ENCODE measurements at regions of chr22 and their contacts with region 1.

Region 1: GRCh38 chr22:50620593-50621355 is 7.2 kb downstream of the ARSA start:
- DNase-seq: peak in 1 of 3 donors; percentile 34
- H3K4me3 ChIP-seq: peak overlapping the region in 2 of 3 experiments; percentile 21 to 60
- H3K4me3 Mint-ChIP-seq: peak overlapping the region; percentile 45 to 84
- H3K27ac ChIP-seq: no peak overlapping the region
- H3K27ac Mint-ChIP-seq: peak overlapping the region in 3 of 7 donors; percentile 6 to 82 (median 63)
- H3K4me1 ChIP-seq: peaks cover 34 to 36% of the 10 kb centered on the region in 2 donors
- H3K4me1 Mint-ChIP-seq: peaks cover 36% of the 10 kb centered on the region
- H3K27me3 ChIP-seq: no peaks in the 10 kb centered on the region
- H3K27me3 Mint-ChIP-seq: peaks cover 5 to 10% (median 5%) of the 10 kb centered on the region in 3 donors
- CTCF ChIP-seq: peak; percentile 82

Region 2: DNA sequence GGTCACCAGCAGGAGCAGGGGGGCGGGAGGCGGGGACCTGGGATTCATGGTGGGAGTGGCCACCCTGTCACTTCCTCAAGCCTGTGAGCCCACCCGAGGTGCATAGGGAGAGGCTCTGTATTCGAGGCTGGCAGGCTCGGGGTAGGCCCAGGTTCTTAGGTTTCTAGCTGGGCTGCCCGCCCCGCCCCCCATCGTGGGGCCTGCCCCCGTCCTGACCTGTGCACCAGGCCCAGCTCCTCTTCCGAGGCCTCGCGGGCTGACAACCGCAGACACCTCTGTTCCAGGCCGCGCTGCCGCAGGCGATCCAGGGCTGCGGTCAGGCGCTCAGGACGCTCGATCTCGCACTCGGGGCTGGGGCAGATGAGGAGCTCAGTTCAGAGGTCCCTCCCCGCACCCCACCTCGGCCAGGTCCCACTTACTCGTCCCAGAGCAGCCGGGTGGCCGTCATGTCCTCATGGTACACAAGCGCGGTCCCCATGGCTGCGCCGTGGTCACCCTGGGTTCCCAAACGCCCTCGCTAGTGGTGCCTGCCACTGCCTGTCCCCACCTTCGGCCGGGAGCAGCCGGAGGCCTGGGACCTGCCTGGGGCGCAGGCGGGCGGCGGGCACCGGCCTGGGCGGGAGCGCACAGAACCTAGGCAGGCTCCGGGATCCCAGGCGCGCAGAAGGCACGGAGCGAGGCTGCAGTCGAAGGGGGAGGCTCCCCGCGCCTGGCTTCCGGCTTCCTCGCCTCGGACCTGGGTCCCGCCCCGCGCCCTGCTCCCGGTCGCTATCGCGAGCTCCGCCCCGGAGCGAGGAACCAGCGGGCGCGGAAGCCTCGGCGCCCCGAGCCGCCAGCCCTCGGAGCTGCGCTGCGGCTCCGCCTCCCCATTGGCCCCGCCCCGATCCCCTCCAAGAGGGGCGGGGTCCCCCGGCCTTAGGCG is 370.0 kb before region 1 on chr22 and contains the start of gene HDAC10:
- intact Hi-C with region 1: loop called in 1 of 2 experiments (anchors 5 kb)
- DNase-seq: peak; percentile 66 to 78 (median 68)
- H3K4me3 ChIP-seq: peak within 1 kb of the TSS; percentile 72 to 96 (median 92)
- H3K4me3 Mint-ChIP-seq: peak within 1 kb of the TSS; percentile 83 to 92
- H3K27ac ChIP-seq: peak within 1 kb of the TSS; percentile 52 to 76
- H3K27ac Mint-ChIP-seq: peak within 1 kb of the TSS in 5 of 7 donors; percentile 33 to 82 (median 59)
- H3K4me1 ChIP-seq: peaks cover 33 to 47% of the 10 kb centered on the region in 2 donors
- H3K4me1 Mint-ChIP-seq: peaks cover 23% of the 10 kb centered on the region
- H3K27me3 ChIP-seq: no peaks in the 10 kb centered on the region
- H3K27me3 Mint-ChIP-seq: peaks cover 0 to 2% (median 0%) of the 10 kb centered on the region in 3 donors
- CTCF ChIP-seq: no peak
- polyA plus RNA-seq, gene HDAC10: 9.2 to 148 (median 13.7) TPM

Region 3: DNA sequence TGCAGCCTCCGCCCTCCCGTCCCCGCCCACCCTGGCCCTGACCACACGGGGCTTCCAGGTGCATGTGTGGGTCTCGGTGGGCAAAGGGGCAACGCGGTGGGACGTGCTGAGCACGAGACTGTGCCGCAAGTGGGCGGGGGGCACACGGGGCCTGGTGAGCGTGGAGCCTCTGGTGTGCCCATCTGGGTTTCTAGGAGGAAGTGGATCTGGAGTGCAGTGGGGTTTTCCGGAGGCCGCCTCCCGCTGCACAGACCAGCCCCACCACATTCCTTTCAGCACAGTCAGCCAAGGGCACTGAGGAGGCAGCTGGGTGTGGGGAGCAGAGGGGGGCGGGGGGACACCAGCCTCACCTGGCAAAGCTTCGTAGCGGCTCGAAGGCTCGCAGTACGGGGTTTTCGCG is 338.4 kb before region 1 on chr22:
- intact Hi-C with region 1: no loop called
- DNase-seq: no peak
- H3K4me3 ChIP-seq: no peak overlapping the region
- H3K4me3 Mint-ChIP-seq: no peak overlapping the region
- H3K27ac ChIP-seq: no peak overlapping the region
- H3K27ac Mint-ChIP-seq: no peak overlapping the region
- H3K4me1 ChIP-seq: no peaks in the 10 kb centered on the region
- H3K4me1 Mint-ChIP-seq: no peaks in the 10 kb centered on the region
- H3K27me3 ChIP-seq: no peaks in the 10 kb centered on the region
- H3K27me3 Mint-ChIP-seq: peaks cover 0 to 2% (median 0%) of the 10 kb centered on the region in 3 donors
- CTCF ChIP-seq: no peak

Region 4: DNA sequence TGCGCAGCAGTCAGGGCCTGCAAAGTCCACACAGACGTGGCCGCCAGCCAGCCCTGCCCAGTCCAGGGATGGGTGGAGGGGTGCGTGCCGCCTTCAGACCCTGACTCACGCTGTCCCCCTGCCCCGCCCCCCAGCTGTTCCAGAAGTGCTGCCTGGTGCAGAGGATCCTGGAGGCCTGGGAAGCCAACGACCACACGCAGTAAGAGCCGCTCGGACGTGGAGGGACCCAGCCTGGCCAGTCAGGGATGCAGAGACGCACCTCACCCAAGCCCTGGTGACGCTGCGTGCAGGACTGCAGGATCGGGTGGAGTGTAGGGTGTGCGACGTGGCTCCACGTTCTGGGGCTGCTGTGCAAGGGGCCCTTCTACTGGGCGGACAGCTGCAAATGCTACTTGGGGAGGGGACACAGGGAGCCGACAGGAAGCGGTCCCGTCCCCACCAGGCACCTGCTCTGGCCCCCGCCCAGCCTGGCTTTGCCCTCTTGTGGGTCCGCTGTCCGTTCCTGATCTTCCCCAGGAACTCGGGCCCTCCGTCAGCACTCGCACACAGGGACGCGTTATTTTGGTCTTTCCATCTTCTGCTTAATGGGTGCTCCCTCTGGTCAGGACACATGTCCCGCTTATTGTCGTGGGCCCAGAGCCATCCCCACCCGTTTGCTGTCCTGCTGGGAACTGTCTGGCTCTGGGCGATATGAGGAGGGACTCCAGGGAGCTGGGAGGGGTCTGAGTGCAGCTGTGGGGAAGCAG is 188.5 kb before region 1 on chr22:
- intact Hi-C with region 1: no loop called
- DNase-seq: no peak
- H3K4me3 ChIP-seq: no peak overlapping the region
- H3K4me3 Mint-ChIP-seq: no peak overlapping the region
- H3K27ac ChIP-seq: no peak overlapping the region
- H3K27ac Mint-ChIP-seq: no peak overlapping the region
- H3K4me1 ChIP-seq: no peaks in the 10 kb centered on the region
- H3K4me1 Mint-ChIP-seq: no peaks in the 10 kb centered on the region
- H3K27me3 ChIP-seq: no peaks in the 10 kb centered on the region
- H3K27me3 Mint-ChIP-seq: no peaks in the 10 kb centered on the region
- CTCF ChIP-seq: no peak

Region 5: GRCh38 chr22:50474668-50475492 is 145.9 kb before region 1 on chr22 and contains the start of gene SBF1:
- intact Hi-C with region 1: loop called in 1 of 2 experiments (anchors 5 kb)
- DNase-seq: peak; percentile 86 to 91 (median 90)
- H3K4me3 ChIP-seq: peak within 1 kb of the TSS; percentile 45 to 85 (median 49)
- H3K4me3 Mint-ChIP-seq: peak within 1 kb of the TSS; percentile 90 to 97
- H3K27ac ChIP-seq: peak within 1 kb of the TSS in 1 of 2 donors; percentile 71
- H3K27ac Mint-ChIP-seq: peak within 1 kb of the TSS in 6 of 7 donors; percentile 52 to 88 (median 72)
- H3K4me1 ChIP-seq: peaks cover 41 to 52% of the 10 kb centered on the region in 2 donors
- H3K4me1 Mint-ChIP-seq: peaks cover 47% of the 10 kb centered on the region
- H3K27me3 ChIP-seq: peaks cover 0 to 15% of the 10 kb centered on the region in 2 donors
- H3K27me3 Mint-ChIP-seq: peaks cover 19 to 40% (median 29%) of the 10 kb centered on the region in 3 donors
- CTCF ChIP-seq: no peak
- polyA plus RNA-seq, gene SBF1: 4.0 to 45.9 (median 6.2) TPM

Region 6: GRCh38 chr22:50525390-50526068 is 95.2 kb before region 1 on chr22 and contains the start of gene SCO2:
- intact Hi-C with region 1: loop called in 1 of 2 experiments (anchors 5 kb)
- DNase-seq: peak; percentile 93 to 94 (median 94)
- H3K4me3 ChIP-seq: peak within 1 kb of the TSS; percentile 72 to 99 (median 73)
- H3K4me3 Mint-ChIP-seq: peak within 1 kb of the TSS; percentile 91 to 95
- H3K27ac ChIP-seq: peak within 1 kb of the TSS; percentile 100
- H3K27ac Mint-ChIP-seq: peak within 1 kb of the TSS; percentile 94 to 100 (median 97)
- H3K4me1 ChIP-seq: peaks cover 42 to 68% of the 10 kb centered on the region in 2 donors
- H3K4me1 Mint-ChIP-seq: peaks cover 30% of the 10 kb centered on the region
- H3K27me3 ChIP-seq: no peaks in the 10 kb centered on the region
- H3K27me3 Mint-ChIP-seq: no peaks in the 10 kb centered on the region
- CTCF ChIP-seq: no peak
- polyA plus RNA-seq, gene SCO2: 39.5 to 101 (median 69.6) TPM

Region 7: GRCh38 chr22:50562523-50563412 is 58.0 kb before region 1 on chr22 and contains the start of gene SYCE3:
- intact Hi-C with region 1: loop called in 1 of 2 experiments (anchors 5 kb)
- DNase-seq: peak; percentile 94 to 96 (median 95)
- H3K4me3 ChIP-seq: peak within 1 kb of the TSS; percentile 53 to 94 (median 66)
- H3K4me3 Mint-ChIP-seq: peak within 1 kb of the TSS; percentile 88 to 96
- H3K27ac ChIP-seq: peak within 1 kb of the TSS in 1 of 2 donors; percentile 45
- H3K27ac Mint-ChIP-seq: peak within 1 kb of the TSS; percentile 57 to 95 (median 73)
- H3K4me1 ChIP-seq: peaks cover 8 to 13% of the 10 kb centered on the region in 2 donors
- H3K4me1 Mint-ChIP-seq: peaks cover 17% of the 10 kb centered on the region
- H3K27me3 ChIP-seq: peaks cover 0 to 8% of the 10 kb centered on the region in 2 donors
- H3K27me3 Mint-ChIP-seq: peaks cover 17 to 22% (median 17%) of the 10 kb centered on the region in 3 donors
- CTCF ChIP-seq: peak; percentile 87
- polyA plus RNA-seq, gene SYCE3: 1.9 to 3.1 TPM in 2 of 3 donors, not detected in the other

Region 8: DNA sequence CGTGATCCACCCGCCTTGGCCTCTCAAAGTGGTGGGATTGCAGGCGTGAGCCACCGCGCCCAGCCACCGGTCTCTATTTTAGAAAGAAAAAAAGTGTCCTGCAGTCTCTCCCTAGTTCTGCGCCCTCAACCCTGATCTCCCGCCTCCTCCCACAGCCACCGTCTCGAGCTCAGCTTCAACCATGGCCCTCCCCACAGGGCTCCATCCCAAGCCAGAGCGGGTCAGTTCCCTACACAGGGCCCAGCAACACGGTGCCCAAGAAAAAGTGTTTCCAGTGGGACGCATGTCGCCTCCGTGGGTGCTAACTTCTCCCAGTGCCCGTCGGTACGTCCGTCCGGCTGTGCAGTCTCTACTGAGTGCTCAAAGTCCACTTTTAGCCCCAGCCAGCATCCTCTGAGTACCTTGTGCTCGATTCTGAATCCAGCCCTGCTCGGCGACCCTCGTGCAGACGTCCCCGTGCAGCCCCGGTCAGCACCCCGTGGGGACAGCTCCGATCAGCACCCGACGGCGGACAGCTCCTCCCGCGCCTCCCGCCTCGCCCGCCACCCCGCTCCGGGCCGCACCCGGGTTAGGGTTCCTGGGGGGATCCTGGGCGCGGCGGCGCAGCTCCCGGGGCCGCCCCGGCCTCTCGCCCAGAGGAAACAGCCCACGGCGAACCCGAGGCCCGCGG is 20.9 kb before region 1 on chr22:
- intact Hi-C with region 1: no loop called
- DNase-seq: no peak
- H3K4me3 ChIP-seq: no peak overlapping the region
- H3K4me3 Mint-ChIP-seq: peak overlapping the region; percentile 66 to 88
- H3K27ac ChIP-seq: no peak overlapping the region
- H3K27ac Mint-ChIP-seq: peak overlapping the region in 1 of 7 donors; percentile 32
- H3K4me1 ChIP-seq: no peaks in the 10 kb centered on the region
- H3K4me1 Mint-ChIP-seq: peaks cover 4% of the 10 kb centered on the region
- H3K27me3 ChIP-seq: peaks cover 35 to 59% of the 10 kb centered on the region in 2 donors
- H3K27me3 Mint-ChIP-seq: peaks cover 51 to 70% (median 61%) of the 10 kb centered on the region in 3 donors
- CTCF ChIP-seq: no peak

Region 9: GRCh38 chr22:50674606-50675549 is 54.1 kb after region 1 on chr22:
- intact Hi-C with region 1: no loop called
- DNase-seq: no peak
- H3K4me3 ChIP-seq: peak overlapping the region in 2 of 3 experiments; percentile 12 to 47
- H3K4me3 Mint-ChIP-seq: peak overlapping the region; percentile 54 to 62
- H3K27ac ChIP-seq: no peak overlapping the region
- H3K27ac Mint-ChIP-seq: no peak overlapping the region
- H3K4me1 ChIP-seq: peaks cover 12 to 14% of the 10 kb centered on the region in 2 donors
- H3K4me1 Mint-ChIP-seq: peaks cover 13% of the 10 kb centered on the region
- H3K27me3 ChIP-seq: peaks cover 18 to 51% of the 10 kb centered on the region in 2 donors
- H3K27me3 Mint-ChIP-seq: peaks cover 51 to 60% (median 56%) of the 10 kb centered on the region in 3 donors
- CTCF ChIP-seq: no peak